Activated B cell treated with CpG ODN at 0.5 μM for 24 hours (primary cell): ENCODE measurements at regions of chr20 and their contacts with region 1.

Region 1: GRCh38 chr20:62623488-62624324 is 18.6 kb upstream of the SLCO4A1 start:
- DNase-seq: peak; percentile 82
- ATAC-seq: peak; percentile 87
- H3K4me3 Mint-ChIP-seq: peak overlapping the region; percentile 80
- H3K27ac Mint-ChIP-seq: peak overlapping the region; percentile 98
- H3K4me1 Mint-ChIP-seq: peaks cover 43% of the 10 kb centered on the region
- H3K27me3 Mint-ChIP-seq: no peaks in the 10 kb centered on the region
- CTCF ChIP-seq: no peak

Region 2: DNA sequence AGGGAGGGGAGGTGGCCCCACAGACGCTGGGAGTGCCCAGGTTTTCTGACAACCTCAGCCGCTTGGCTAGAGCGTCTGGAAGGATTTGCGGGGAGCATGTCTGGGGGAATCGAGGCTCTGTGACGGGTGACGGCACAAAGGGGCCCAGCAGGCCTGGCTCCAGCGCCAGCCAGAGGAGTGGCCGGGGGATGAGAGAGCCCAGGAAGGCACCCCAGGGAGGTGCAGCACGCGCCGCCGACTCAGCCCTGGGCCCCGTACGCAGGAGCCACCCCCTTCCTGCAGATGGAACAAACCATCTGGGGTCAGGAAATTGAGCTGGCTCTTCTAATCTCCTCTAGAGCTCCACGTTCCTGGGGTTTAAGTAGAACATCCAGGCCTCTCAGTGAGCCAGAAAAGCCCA is 12.7 kb after region 1 on chr20:
- CTCF ChIA-PET with region 1: interaction called, 22 read pairs
- POLR2A ChIA-PET with region 1: interaction called, 147 read pairs
- intact Hi-C with region 1: no loop called
- DNase-seq: no peak
- ATAC-seq: no peak
- H3K4me3 Mint-ChIP-seq: no peak overlapping the region
- H3K27ac Mint-ChIP-seq: no peak overlapping the region
- H3K4me1 Mint-ChIP-seq: peaks cover 2% of the 10 kb centered on the region
- H3K27me3 Mint-ChIP-seq: peaks cover 10% of the 10 kb centered on the region
- CTCF ChIP-seq: no peak

Region 3: DNA sequence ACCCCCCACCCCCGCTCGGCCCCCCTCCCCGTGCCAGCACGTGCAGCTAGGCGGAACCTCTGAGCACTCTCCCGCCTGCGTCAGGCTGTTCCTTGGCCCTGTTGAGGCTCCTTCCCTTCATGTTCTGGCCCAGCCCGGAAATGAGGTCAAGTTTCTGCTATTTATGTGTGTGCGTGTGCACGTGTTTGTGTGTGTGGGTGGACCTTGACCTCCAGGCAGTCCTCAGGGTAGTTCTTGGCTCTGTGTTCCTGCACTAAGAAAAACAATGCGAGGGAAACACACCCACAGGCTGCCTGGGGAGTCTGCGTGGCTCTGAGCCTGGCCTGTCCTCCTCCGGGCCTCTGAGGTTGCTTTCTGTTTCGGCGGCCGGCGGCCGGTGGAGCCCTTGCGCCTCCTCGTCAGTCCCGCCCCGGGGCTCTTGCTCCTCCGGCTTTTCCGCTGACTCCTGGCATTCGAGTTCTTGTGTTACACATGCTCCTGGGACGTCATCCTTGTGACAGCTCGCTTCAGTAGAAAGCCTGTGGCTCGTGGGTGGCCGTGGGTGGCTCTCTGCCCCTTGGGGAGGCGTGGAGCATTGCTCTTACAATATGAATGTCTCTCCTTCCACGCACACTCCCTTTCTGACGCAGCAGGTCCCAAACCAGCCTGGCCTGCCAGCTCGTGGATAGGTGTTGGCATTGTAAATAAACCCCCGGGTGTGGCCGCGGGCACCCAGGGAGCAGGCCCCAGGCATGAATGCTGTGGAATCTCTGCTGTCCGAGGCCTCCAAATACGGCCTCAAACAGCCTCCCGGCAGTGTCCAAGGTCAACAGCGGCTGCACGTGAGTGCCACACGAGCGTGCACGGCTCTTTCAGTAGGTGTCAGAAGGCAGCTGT is 28.6 kb after region 1 on chr20:
- CTCF ChIA-PET with region 1: interaction called, 7 read pairs
- POLR2A ChIA-PET with region 1: interaction called, 134 read pairs
- intact Hi-C with region 1: loop called (anchors 1 kb)
- DNase-seq: peak; percentile 55
- ATAC-seq: peak; percentile 55
- H3K4me3 Mint-ChIP-seq: peak overlapping the region; percentile 82
- H3K27ac Mint-ChIP-seq: peak overlapping the region; percentile 94
- H3K4me1 Mint-ChIP-seq: peaks cover 63% of the 10 kb centered on the region
- H3K27me3 Mint-ChIP-seq: no peaks in the 10 kb centered on the region
- CTCF ChIP-seq: no peak